ENCODE measurements at regions of chr16 and their contacts with region 1.

Region 1: GRCh38 chr16:19086322-19087199 is 19.1 kb downstream of the COQ7 start:
- DNase-seq: peak; percentile 88
- H3K4me3 ChIP-seq: peak overlapping the region; percentile 41
- H3K27ac ChIP-seq: no peak overlapping the region
- H3K4me1 ChIP-seq: peaks cover 5% of the 10 kb centered on the region
- H3K27me3 ChIP-seq: no peaks in the 10 kb centered on the region
- CTCF ChIP-seq: peak; percentile 99

Region 2: GRCh38 chr16:18969050-18969854 is 117.3 kb before region 1 on chr16:
- CTCF ChIA-PET with region 1: no interaction called
- POLR2A ChIA-PET with region 1: no interaction called
- intact Hi-C with region 1: no loop called
- DNase-seq: peak; percentile 90
- H3K4me3 ChIP-seq: peak overlapping the region; percentile 46
- H3K27ac ChIP-seq: no peak overlapping the region
- H3K4me1 ChIP-seq: peaks cover 5% of the 10 kb centered on the region
- H3K27me3 ChIP-seq: no peaks in the 10 kb centered on the region
- CTCF ChIP-seq: peak; percentile 95

Region 3: DNA sequence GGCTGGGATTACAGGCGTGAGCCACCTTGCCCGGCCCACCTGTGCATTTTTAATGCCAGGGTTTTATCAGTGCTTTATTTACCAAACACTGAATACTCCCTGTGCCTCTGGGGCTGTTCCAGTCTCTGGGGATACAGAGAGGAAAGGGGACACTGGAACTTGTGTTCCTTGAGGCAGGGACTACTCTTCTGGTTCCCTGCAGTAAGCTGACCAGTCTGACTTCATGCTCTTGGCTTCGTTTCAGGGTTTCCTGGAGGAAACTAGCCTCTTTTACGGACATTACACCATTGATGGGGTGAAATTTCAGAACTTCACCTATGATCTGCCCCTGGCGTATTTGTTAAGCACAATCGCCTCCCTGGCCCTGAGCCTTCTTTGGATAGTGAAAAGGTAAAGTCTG is 56.6 kb before region 1 on chr16:
- CTCF ChIA-PET with region 1: no interaction called
- POLR2A ChIA-PET with region 1: no interaction called
- intact Hi-C with region 1: no loop called
- DNase-seq: no peak
- H3K4me3 ChIP-seq: no peak overlapping the region
- H3K27ac ChIP-seq: no peak overlapping the region
- H3K4me1 ChIP-seq: no peaks in the 10 kb centered on the region
- H3K27me3 ChIP-seq: no peaks in the 10 kb centered on the region
- CTCF ChIP-seq: no peak

Region 4: DNA sequence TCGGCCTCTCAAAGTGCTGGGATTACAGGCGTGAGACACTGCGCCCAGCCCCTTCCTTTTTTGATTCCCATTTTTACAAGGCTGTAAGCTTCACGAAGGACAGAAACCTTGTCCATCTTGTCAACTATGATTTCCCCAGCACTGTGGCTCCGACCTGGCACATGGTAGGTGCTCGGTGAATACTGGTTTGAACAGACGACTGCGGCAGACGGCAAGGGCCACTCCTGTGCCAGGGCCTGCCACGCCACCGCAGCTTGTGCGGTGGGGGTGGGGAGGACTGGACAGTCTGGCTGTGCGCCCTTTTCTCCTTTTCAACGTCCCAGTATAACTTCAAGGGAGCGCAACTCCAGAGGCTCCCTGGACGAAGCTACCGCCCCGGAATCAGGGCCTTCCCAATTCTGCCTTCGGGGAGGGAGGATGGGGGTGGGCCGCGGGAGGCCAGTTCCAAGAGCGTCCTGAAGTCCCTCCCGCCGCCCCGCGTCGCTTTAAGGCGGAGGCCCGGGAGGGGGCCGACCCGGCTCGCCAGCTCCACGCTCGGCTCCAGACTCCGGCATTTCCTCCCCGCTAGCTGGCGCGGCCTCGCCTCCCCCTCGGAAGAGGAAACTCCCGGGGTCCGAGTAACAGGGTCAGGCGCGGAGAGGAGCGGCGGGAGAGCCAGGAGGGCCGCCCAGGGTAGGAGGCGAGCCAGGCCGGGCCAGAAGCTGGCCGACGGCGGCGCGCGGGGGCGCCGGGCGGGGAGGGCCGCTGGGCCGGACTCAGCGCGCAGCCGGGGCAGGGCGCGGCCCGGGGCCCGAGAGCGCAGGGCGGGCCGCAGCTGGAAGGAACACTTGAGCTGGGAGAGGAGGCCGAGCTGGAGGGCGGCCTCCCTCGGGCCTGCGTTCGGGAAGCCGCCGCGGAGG is 27.1 kb after region 1 on chr16 and contains the start of gene ITPRIPL2:
- CTCF ChIA-PET with region 1: no interaction called
- POLR2A ChIA-PET with region 1: interaction called, 16 read pairs
- intact Hi-C with region 1: no loop called
- DNase-seq: peak; percentile 81
- H3K4me3 ChIP-seq: peak within 1 kb of the TSS; percentile 51
- H3K27ac ChIP-seq: peak within 1 kb of the TSS; percentile 81
- H3K4me1 ChIP-seq: peaks cover 34% of the 10 kb centered on the region
- H3K27me3 ChIP-seq: no peaks in the 10 kb centered on the region
- CTCF ChIP-seq: no peak
- total RNA-seq, gene ITPRIPL2: 20.2 and 22.8 TPM in 2 replicates

Region 5: DNA sequence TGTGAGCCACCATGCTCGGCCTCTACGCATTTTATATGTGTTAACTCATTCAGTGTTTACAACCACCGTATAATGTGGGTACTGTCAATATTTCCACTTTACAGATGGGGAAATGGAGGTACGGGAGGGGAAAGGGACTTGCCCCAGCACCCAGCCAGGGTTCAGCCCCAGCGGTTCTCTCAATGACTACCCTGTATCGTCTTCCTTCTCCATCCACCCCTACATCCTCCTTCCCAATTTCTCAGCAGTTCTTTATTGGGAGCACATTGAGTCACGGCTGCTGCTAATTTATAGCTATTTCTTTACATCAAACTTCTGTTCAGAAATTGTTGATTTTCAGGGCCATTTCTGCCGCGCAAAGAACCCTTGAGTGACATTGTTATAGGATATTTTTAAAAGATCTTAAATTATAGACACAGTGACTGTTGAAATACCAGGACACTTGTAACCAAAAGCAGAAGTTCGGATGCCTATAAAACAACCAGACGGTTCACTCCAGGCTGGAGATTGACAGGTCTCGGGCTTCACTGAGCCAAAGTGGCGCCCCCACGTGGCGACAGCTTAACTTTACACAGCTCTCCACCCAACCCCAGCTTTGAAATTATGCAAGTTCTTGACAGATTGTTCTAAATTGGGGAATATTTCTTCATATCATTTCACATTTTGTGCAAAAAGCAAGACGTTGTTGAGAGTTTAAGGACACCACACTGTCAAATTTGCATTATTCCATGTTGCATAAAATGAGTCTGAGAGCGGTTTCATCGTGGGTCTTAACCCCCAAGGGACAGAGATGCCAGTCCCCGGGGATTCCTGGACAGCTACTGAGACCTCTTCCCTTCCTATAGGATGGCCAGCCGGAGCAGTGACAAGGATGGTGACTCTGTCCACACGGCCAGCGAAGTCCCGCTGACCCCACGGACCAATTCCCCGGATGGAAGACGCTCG is 93.3 kb after region 1 on chr16:
- CTCF ChIA-PET with region 1: interaction called, 22 read pairs
- POLR2A ChIA-PET with region 1: no interaction called
- intact Hi-C with region 1: loop called (anchors 1 kb)
- DNase-seq: peak; percentile 84
- H3K4me3 ChIP-seq: no peak overlapping the region
- H3K27ac ChIP-seq: no peak overlapping the region
- H3K4me1 ChIP-seq: peaks cover 9% of the 10 kb centered on the region
- H3K27me3 ChIP-seq: no peaks in the 10 kb centered on the region
- CTCF ChIP-seq: peak; percentile 91

Region 6: DNA sequence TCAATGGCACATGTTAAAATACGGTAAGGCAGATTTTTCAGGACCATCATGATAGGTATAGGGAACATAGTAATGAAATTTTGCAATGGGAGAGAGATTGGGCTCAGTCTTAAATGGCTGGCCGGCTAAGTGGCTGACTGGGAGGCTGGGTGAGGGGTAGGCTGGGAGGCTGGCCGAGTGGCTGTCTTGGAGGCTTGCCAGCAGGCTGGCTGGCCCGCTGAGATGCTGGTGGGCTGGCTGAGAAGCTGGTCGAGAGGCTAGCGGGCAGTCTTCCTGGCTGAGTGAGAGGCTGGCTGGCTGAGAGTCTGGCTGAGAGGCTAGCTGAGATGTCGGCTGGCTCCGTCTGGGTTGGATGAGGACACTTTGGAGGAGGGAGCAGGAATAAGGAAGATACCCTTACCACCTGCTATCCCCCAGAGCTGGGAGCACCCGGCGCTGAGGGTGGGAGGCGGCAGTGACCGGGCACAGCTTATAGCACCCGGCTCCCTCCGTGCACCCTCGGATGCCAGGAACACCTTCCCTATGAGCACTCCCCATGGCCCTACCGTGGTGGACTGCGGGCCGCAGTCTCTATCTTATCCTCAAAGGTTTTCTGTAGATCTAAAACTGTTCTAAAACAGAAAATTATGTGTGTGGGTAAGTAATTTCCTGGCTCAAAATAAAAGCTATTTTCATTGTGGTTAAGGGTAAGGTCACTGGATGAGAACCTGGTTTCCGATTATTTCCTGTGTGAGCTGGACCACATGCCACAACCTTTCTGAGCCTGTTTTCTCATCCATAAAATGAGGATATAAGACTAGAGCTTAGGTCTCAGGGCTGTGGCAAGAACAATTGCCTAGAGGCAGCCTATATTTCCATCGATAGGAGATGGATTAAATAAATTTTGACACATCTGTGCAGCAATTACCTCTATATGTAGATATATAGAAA is 296.6 kb after region 1 on chr16:
- CTCF ChIA-PET with region 1: no interaction called
- POLR2A ChIA-PET with region 1: no interaction called
- intact Hi-C with region 1: loop called (anchors 1 kb)
- DNase-seq: no peak
- H3K4me3 ChIP-seq: no peak overlapping the region
- H3K27ac ChIP-seq: no peak overlapping the region
- H3K4me1 ChIP-seq: no peaks in the 10 kb centered on the region
- H3K27me3 ChIP-seq: no peaks in the 10 kb centered on the region
- CTCF ChIP-seq: no peak

Region 7: DNA sequence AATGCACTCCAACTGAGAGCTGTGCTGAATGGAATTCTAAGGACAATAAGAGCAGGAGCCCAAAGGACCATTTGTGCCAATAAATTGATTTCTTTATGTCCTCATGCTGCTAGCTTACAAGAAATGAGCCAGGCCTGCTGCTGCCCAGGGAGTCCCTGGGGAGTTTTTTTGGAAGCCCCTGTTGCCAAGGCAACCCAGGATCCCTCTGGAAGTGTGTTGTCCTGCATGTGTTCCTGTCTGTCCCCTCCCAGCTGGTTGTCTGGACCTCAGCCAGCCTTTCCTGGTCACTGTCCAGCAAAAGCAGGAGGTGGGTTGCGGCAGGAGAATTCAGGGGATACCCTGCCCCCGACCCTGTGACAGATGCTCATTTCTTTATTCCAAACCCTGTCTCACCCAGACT is 849.1 kb after region 1 on chr16:
- CTCF ChIA-PET with region 1: interaction called, 10 read pairs
- POLR2A ChIA-PET with region 1: no interaction called
- intact Hi-C with region 1: no loop called
- DNase-seq: no peak
- H3K4me3 ChIP-seq: no peak overlapping the region
- H3K27ac ChIP-seq: no peak overlapping the region
- H3K4me1 ChIP-seq: no peaks in the 10 kb centered on the region
- H3K27me3 ChIP-seq: peaks cover 23% of the 10 kb centered on the region
- CTCF ChIP-seq: no peak